Endothelial cell of umbilical vein (primary cell): ENCODE measurements at regions of chr11 and their contacts with region 1.

Region 1: DNA sequence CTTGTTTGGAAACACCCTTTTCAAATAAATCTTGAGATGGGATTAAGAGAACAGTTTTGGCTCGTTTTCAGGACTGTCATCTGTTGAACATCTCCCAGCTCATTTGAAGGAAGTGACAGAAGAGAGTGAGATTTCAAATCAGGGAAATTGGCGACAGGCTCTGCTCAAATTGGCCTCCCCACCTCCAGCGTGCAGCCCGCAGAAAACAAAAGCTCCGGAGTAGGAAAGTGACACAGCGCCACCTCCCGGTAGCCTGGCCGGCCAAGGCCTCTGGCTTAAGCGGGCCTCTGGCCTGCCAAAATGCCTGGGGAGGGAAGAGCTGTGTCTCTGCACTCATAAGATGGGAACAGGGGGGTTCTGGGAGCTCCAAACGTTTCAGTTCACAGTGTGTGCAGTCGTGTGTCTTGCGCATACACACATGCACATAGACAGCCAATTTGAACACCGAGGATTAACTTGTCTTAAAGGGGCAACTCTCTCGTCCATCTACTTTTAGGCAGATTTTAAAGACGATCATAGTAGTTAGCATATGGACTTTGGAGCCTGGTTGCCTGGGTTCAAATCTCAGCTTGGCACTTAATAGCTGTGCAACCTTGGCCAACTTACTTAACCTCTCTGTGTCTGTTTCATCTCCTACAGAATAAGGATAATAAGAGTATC is 132.7 kb upstream of the RCN1 start:
- DNase-seq: peak; percentile 44
- H3K4me3 ChIP-seq: no peak overlapping the region
- H3K27ac ChIP-seq: no peak overlapping the region
- H3K4me1 ChIP-seq: no peaks in the 10 kb centered on the region
- H3K27me3 ChIP-seq: no peaks in the 10 kb centered on the region
- CTCF ChIP-seq: peak; percentile 83 to 90
- POLR2A ChIP-seq: no peak

Region 2: GRCh38 chr11:31107062-31107461 is 851.1 kb before region 1 on chr11:
- CTCF ChIA-PET with region 1: interaction called, 20 read pairs
- POLR2A ChIA-PET with region 1: no interaction called
- dilution Hi-C with region 1: no loop called
- intact Hi-C with region 1: loop called (anchors 2 kb)
- DNase-seq: peak; percentile 44
- H3K4me3 ChIP-seq: no peak overlapping the region
- H3K27ac ChIP-seq: no peak overlapping the region
- H3K4me1 ChIP-seq: no peaks in the 10 kb centered on the region
- H3K27me3 ChIP-seq: no peaks in the 10 kb centered on the region
- CTCF ChIP-seq: peak; percentile 20 to 53
- POLR2A ChIP-seq: no peak

Region 3: GRCh38 chr11:31340903-31341572 is 617.2 kb before region 1 on chr11:
- CTCF ChIA-PET with region 1: interaction called, 25 read pairs
- POLR2A ChIA-PET with region 1: no interaction called
- dilution Hi-C with region 1: no loop called
- intact Hi-C with region 1: loop called (anchors 1 kb)
- DNase-seq: peak; percentile 43
- H3K4me3 ChIP-seq: no peak overlapping the region
- H3K27ac ChIP-seq: no peak overlapping the region
- H3K4me1 ChIP-seq: no peaks in the 10 kb centered on the region
- H3K27me3 ChIP-seq: peaks cover 3 to 4% of the 10 kb centered on the region in 2 experiments
- CTCF ChIP-seq: peak; percentile 49 to 70
- POLR2A ChIP-seq: no peak

Region 4: GRCh38 chr11:31487848-31488247 is 470.4 kb before region 1 on chr11:
- CTCF ChIA-PET with region 1: interaction called, 28 read pairs
- POLR2A ChIA-PET with region 1: no interaction called
- dilution Hi-C with region 1: no loop called
- intact Hi-C with region 1: loop called (anchors 1 kb)
- DNase-seq: peak; percentile 74
- H3K4me3 ChIP-seq: no peak overlapping the region
- H3K27ac ChIP-seq: no peak overlapping the region
- H3K4me1 ChIP-seq: no peaks in the 10 kb centered on the region
- H3K27me3 ChIP-seq: no peaks in the 10 kb centered on the region
- CTCF ChIP-seq: peak; percentile 24 to 28
- POLR2A ChIP-seq: no peak

Region 5: DNA sequence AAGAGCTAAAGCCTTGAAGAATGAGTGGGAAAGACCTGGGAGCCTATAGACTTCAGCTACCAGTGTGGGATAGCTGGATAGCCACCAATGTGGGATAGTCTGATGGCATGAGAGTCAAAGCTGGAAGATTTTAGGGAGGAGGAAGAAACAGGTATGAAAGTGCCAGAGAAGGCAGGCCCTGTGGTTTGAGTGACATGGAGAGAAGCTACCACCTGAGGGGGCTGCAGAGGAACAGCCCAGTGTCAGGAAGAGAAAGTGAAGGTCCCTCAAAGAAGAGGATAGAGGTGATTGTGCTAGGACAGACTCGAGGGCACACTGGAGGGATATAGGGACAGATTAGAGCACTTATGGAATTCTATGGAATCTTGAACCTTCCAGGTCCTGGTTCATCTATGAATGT is 124.0 kb before region 1 on chr11:
- CTCF ChIA-PET with region 1: no interaction called
- POLR2A ChIA-PET with region 1: no interaction called
- dilution Hi-C with region 1: no loop called
- intact Hi-C with region 1: no loop called
- DNase-seq: no peak
- H3K4me3 ChIP-seq: no peak overlapping the region
- H3K27ac ChIP-seq: no peak overlapping the region
- H3K4me1 ChIP-seq: no peaks in the 10 kb centered on the region
- H3K27me3 ChIP-seq: peaks cover 40 to 48% of the 10 kb centered on the region in 2 experiments
- CTCF ChIP-seq: no peak
- POLR2A ChIP-seq: no peak

Region 6: DNA sequence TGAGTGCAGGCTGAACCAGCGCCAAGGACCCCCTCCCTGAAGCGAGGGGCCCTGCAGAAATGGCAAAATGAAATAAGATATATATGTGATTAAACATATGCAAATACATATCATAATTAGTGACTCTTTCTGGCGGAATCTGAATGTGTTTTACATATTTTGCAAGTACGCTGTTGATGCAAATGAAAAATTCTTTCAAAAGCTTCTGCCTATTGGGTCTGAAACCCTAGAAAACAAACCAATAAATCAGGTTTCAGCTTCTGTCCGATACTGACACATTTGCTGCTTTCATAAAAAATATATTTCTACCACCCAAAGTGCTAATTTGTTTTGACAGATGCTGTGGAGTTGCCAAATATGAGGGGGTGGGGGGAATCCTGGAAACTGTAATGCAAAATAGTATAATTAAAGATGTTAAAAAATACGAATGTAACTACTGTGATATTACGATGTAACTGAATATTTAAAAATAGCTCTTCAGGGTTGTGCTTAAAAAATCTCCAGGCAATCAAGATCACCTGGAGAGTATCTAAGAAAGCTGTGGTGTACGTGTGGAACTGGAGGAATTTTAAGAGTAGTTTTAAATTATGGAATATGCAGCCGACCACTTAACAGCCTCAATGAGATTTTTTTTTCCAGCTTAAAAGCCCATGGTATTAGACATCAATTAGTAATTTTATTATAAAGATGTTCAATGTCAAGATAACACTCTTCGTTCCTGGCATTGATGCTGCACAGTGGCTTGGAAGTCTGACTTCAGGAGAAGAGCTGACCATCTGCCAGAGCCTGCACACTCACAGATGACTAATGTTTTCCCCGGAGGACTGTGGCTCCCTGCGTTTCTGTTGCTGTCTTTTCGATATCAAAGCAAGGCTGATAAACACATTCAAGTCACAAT is 10.5 kb after region 1 on chr11:
- CTCF ChIA-PET with region 1: interaction called, 23 read pairs
- POLR2A ChIA-PET with region 1: no interaction called
- dilution Hi-C with region 1: no loop called
- intact Hi-C with region 1: no loop called
- DNase-seq: no peak
- H3K4me3 ChIP-seq: no peak overlapping the region
- H3K27ac ChIP-seq: no peak overlapping the region
- H3K4me1 ChIP-seq: no peaks in the 10 kb centered on the region
- H3K27me3 ChIP-seq: no peaks in the 10 kb centered on the region
- CTCF ChIP-seq: no peak
- POLR2A ChIP-seq: no peak

Region 7: DNA sequence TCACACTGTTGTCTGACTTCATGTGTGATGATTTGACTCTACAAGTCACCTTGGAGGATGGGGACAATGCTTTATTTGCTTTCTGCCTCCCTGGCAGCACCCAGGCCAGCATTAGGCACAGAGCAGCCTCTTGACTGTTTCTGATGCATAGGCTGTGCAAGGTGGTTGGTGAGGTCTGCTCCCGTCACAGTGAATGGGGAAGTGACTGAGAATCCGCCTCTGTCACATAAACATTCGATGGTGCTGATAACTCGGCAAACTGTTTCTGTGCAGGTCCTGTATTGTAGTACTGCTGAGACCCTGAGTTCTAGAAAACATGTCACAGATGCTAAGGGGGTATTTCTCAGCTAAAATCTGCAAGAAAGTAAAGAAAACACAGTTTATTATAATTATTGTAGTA is 107.7 kb after region 1 on chr11:
- CTCF ChIA-PET with region 1: no interaction called
- POLR2A ChIA-PET with region 1: no interaction called
- dilution Hi-C with region 1: no loop called
- intact Hi-C with region 1: no loop called
- DNase-seq: no peak
- H3K4me3 ChIP-seq: no peak overlapping the region
- H3K27ac ChIP-seq: no peak overlapping the region
- H3K4me1 ChIP-seq: no peaks in the 10 kb centered on the region
- H3K27me3 ChIP-seq: peaks cover 38 to 53% of the 10 kb centered on the region in 2 experiments
- CTCF ChIP-seq: no peak
- POLR2A ChIP-seq: no peak